K562 (cell line): ENCODE measurements at regions of chr16 and their contacts with region 1.

Region 1: DNA sequence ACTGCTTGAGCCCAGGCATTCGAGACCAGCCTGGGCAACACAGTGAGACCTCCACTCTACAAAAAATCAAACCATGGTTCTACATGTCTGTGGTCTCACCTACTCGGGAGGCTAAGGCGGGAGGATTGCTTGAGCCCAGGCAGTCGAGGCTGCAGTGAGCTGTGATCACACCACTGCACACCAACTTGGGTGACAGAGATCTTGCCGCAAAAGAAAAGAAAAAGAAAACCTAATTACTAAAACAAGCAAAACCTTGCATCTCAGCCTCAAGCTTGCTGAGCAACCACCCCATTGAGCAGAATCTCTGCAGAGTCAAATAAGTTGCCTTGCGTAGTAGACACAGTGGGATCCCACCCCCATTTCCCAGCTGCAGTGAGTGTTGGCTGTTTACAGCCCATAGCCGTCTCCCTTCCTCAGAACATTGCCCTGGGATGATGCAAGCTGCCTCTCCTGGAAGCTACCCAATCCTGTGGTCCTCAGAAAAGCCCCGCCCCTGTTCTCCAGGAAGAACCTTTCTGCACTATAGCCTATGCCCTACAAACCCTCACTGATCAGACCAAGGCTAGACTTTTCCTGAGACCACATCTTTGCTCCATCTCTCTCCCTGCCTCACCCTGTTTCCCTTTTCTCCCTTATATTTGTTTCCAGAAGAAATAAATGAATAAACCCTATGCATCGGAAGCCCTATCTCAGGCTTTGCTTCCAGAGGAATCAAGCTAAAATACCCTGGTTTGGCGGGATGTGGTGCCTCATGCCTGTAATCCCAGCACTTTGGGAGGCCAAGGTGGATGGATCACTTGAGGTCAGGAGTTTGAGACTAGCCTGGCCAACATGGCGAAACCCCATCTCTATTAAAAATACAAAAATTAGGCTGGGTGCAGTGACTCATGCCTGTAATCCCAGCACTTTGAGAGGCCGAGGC is 16.7 kb upstream of the ERN2 start:
- DNase-seq: peak; percentile 34 to 79 (median 60)
- ATAC-seq: peak; percentile 96
- H3K4me3 ChIP-seq: no peak overlapping the region
- H3K27ac ChIP-seq: no peak overlapping the region; the same call in 2 of the 3 replicates
- H3K4me1 ChIP-seq: peaks cover 7 to 11% of the 10 kb centered on the region in 2 experiments; a peak in 4 of 5 replicates
- H3K27me3 ChIP-seq: no peaks in the 10 kb centered on the region
- CTCF ChIP-seq: no peak
- EP300 ChIP-seq: peak; percentile 43; the same call in 1 of the 2 replicates
- POLR2A ChIP-seq: no peak
- RAD21 ChIP-seq: no peak

Region 2: DNA sequence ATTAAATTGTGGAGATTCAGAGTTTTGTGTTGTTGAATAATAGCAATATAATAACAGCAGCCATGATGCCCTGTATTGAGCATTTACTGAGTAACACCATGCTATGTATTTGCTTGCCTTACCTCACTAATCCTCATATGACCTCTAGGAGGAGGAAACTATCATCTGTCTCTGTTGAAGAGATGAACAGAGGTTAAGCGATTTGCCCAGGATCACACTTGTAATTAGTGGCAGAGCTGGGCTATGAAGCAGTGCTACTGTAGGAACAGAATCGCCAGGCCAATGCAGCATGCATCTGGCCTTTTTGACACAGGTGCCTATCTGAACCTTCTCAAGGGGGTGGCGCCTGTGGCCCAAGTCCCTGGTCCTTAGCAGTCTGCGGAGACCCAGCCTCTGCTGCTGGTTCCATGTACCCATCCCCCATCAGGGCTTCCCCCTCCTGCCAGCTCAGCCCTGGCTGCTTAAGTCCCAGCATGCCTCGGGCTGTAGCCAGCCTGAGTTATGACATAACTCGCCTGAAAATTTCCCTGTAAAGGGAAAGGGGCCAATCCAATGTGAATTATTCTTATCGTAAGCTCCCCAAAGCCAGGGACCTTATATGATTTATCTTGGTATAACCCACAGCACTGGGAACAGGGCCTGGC is 966.2 kb before region 1 on chr16:
- CTCF ChIA-PET with region 1: no interaction called
- POLR2A ChIA-PET with region 1: no interaction called
- in situ Hi-C with region 1: no loop called
- intact Hi-C with region 1: no loop called
- DNase-seq: no peak
- ATAC-seq: no peak
- H3K4me3 ChIP-seq: no peak overlapping the region
- H3K27ac ChIP-seq: no peak overlapping the region
- H3K4me1 ChIP-seq: no peaks in the 10 kb centered on the region
- H3K27me3 ChIP-seq: no peaks in the 10 kb centered on the region
- CTCF ChIP-seq: no peak
- EP300 ChIP-seq: no peak
- POLR2A ChIP-seq: no peak
- RAD21 ChIP-seq: no peak

Region 3: GRCh38 chr16:23556881-23557778 is 172.6 kb before region 1 on chr16 and contains the starts of genes EARS2 and UBFD1:
- CTCF ChIA-PET with region 1: no interaction called
- POLR2A ChIA-PET with region 1: interaction called, 3 read pairs
- in situ Hi-C with region 1: no loop called
- intact Hi-C with region 1: loop called (anchors 10 kb)
- DNase-seq: peak; percentile 95 to 99 (median 96)
- ATAC-seq: peak; percentile 96
- H3K4me3 ChIP-seq: peak within 1 kb of the TSS; percentile 97
- H3K27ac ChIP-seq: peak within 1 kb of the TSS; percentile 92
- H3K4me1 ChIP-seq: peaks cover 8 to 12% of the 10 kb centered on the region in 2 experiments; a peak in 3 of 5 replicates
- H3K27me3 ChIP-seq: no peaks in the 10 kb centered on the region
- CTCF ChIP-seq: peak; percentile 96 to 98 (median 98)
- EP300 ChIP-seq: peak; percentile 36; the same call in 1 of the 2 replicates
- POLR2A ChIP-seq: peak; percentile 88
- RAD21 ChIP-seq: peak; percentile 62 to 68
- polyA plus RNA-seq, gene EARS2: 17.6 to 20.4 TPM
- polyA plus RNA-seq, gene UBFD1: 10.7 to 11.0 TPM

Region 4: GRCh38 chr16:23678430-23679273 is 51.1 kb before region 1 on chr16 and contains the start of gene PLK1:
- CTCF ChIA-PET with region 1: no interaction called
- POLR2A ChIA-PET with region 1: interaction called, 3 read pairs
- in situ Hi-C with region 1: no loop called
- intact Hi-C with region 1: loop called (anchors 2 kb)
- DNase-seq: peak; percentile 86 to 95 (median 91)
- ATAC-seq: peak; percentile 96
- H3K4me3 ChIP-seq: peak within 1 kb of the TSS; percentile 87
- H3K27ac ChIP-seq: peak within 1 kb of the TSS; percentile 99
- H3K4me1 ChIP-seq: peaks cover 19 to 28% of the 10 kb centered on the region in 2 experiments; a peak in 4 of 5 replicates
- H3K27me3 ChIP-seq: no peaks in the 10 kb centered on the region
- CTCF ChIP-seq: peak; percentile 62 to 63 (median 62)
- EP300 ChIP-seq: no peak
- POLR2A ChIP-seq: peak; percentile 85
- RAD21 ChIP-seq: peak; percentile 59 to 73
- polyA plus RNA-seq, gene PLK1: 13.6 to 24.8 TPM

Region 5: DNA sequence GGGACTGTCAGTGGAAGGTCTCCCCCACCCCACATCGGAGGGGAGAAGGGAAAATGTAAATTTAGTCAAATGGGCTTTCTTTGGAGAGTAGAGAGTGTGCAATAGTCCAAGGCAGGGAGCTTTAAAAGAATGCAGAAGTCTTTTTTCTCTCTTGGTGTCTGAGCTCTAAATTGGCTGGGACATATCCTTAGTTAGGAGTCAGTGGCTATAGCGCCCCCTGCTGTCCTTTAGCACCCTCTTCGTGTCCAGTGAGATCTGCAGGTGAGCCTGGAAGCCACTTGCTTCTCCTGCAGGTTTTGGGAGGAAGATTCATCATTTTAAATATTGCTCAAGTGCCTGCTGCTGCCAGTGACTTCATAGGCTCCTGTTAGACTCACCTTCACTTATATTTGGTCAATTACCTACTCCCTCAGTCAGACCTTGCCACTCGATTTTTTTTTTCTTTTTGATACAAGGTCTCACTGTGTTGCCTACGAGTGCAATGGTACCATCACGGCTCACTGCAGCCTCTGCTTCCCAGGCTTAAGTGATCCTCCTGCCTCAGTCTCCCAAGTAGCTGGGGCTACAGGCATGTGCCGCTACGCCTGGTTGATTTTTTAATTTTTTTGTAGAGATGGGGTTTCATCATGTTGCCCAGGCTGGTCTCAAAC is 280.8 kb after region 1 on chr16:
- CTCF ChIA-PET with region 1: interaction called, 14 read pairs
- POLR2A ChIA-PET with region 1: interaction called, 3 read pairs
- in situ Hi-C with region 1: no loop called
- intact Hi-C with region 1: loop called (anchors 10 kb)
- DNase-seq: peak; percentile 71 to 91 (median 76)
- ATAC-seq: peak; percentile 93
- H3K4me3 ChIP-seq: no peak overlapping the region
- H3K27ac ChIP-seq: no peak overlapping the region
- H3K4me1 ChIP-seq: peaks cover 4 to 12% of the 10 kb centered on the region in 2 experiments; a peak in 3 of 5 replicates
- H3K27me3 ChIP-seq: no peaks in the 10 kb centered on the region
- CTCF ChIP-seq: peak; percentile 83 to 85 (median 85)
- EP300 ChIP-seq: no peak
- POLR2A ChIP-seq: no peak
- RAD21 ChIP-seq: peak; percentile 87 to 89

Region 6: GRCh38 chr16:24036614-24037013 is 306.9 kb after region 1 on chr16:
- CTCF ChIA-PET with region 1: interaction called, 20 read pairs
- POLR2A ChIA-PET with region 1: no interaction called
- in situ Hi-C with region 1: loop called (anchors 10 kb)
- intact Hi-C with region 1: no loop called
- DNase-seq: peak; percentile 37 to 57 (median 41)
- ATAC-seq: peak; percentile 68
- H3K4me3 ChIP-seq: no peak overlapping the region
- H3K27ac ChIP-seq: no peak overlapping the region
- H3K4me1 ChIP-seq: peaks cover 0 to 3% of the 10 kb centered on the region in 2 experiments; a peak in 2 of 5 replicates
- H3K27me3 ChIP-seq: no peaks in the 10 kb centered on the region; a peak in 1 of 5 replicates
- CTCF ChIP-seq: peak; percentile 52 to 63 (median 58)
- EP300 ChIP-seq: no peak
- POLR2A ChIP-seq: no peak
- RAD21 ChIP-seq: peak; percentile 62 to 75

Region 7: GRCh38 chr16:24253192-24253591 is 523.4 kb after region 1 on chr16:
- CTCF ChIA-PET with region 1: no interaction called
- POLR2A ChIA-PET with region 1: no interaction called
- in situ Hi-C with region 1: loop called (anchors 10 kb)
- intact Hi-C with region 1: loop called (anchors 10 kb)
- DNase-seq: peak; percentile 63 to 73 (median 67)
- ATAC-seq: peak; percentile 89
- H3K4me3 ChIP-seq: no peak overlapping the region
- H3K27ac ChIP-seq: no peak overlapping the region
- H3K4me1 ChIP-seq: peaks cover 0 to 8% of the 10 kb centered on the region in 2 experiments; a peak in 1 of 5 replicates
- H3K27me3 ChIP-seq: peaks cover 5 to 12% of the 10 kb centered on the region in 2 experiments; a peak in 2 of 5 replicates
- CTCF ChIP-seq: peak; percentile 61 to 75 (median 71)
- EP300 ChIP-seq: no peak
- POLR2A ChIP-seq: no peak
- RAD21 ChIP-seq: peak; percentile 46 to 75

Region 8: GRCh38 chr16:24504472-24505345 is 774.9 kb after region 1 on chr16:
- CTCF ChIA-PET with region 1: no interaction called
- POLR2A ChIA-PET with region 1: no interaction called
- in situ Hi-C with region 1: loop called (anchors 10 kb)
- intact Hi-C with region 1: loop called (anchors 10 kb)
- DNase-seq: peak; percentile 70 to 80 (median 72)
- ATAC-seq: peak; percentile 98
- H3K4me3 ChIP-seq: no peak overlapping the region
- H3K27ac ChIP-seq: no peak overlapping the region
- H3K4me1 ChIP-seq: peaks cover 6 to 9% of the 10 kb centered on the region in 2 experiments; a peak in 3 of 5 replicates
- H3K27me3 ChIP-seq: peaks cover 3 to 16% of the 10 kb centered on the region in 2 experiments; a peak in 2 of 5 replicates
- CTCF ChIP-seq: peak; percentile 83 to 92 (median 86)
- EP300 ChIP-seq: no peak
- POLR2A ChIP-seq: no peak
- RAD21 ChIP-seq: peak; percentile 65 to 83